SK-N-SH (cell line): ENCODE measurements at regions of chr14 and their contacts with region 1.

Region 1: DNA sequence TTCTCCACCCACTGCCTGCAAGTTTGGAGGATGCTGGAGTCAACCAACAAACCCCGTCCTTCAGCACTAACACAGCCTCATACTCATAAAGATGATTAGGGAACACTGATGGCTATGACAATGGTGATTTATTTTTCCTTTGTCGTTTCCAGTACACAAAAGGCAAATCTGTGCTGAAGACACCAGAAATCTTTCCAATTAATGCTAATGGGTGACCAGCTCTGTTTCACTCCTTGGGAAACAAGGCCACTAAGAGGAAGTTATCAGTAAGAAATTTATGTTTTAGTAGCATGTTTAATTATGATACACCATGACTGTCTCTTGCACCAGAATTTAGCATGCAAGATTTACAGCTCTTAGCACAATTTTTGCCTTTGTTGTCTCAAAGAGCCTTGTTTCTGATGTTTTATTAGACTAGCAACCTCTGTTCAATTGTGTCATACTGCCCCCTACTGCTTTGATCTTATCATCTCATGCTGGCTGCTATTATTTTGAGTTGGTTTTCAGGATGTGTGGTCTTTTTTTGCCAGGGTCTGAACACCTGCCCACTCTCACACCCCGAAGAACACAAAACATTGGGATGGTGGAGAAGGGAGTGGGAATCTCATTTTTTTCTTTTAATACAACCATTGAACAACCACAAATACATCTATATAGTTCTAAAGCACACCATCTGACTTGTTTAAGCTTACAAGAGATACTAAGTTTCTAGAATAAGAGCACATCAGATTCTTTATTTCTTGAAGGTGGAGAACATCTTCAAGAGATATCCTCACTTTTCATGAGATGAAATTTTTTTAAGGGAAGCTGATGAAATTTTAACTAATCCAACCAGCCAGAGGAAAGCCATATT is 160.9 kb downstream of the SPTSSA start:
- DNase-seq: peak; percentile 49
- H3K4me3 ChIP-seq: no peak overlapping the region; a peak in 1 of 4 replicates
- H3K27ac ChIP-seq: no peak overlapping the region
- H3K4me1 ChIP-seq: no peaks in the 10 kb centered on the region; a peak in 1 of 4 replicates
- H3K27me3 ChIP-seq: no peaks in the 10 kb centered on the region; the same call in 1 of the 2 replicates
- CTCF ChIP-seq: peak; percentile 61
- EP300 ChIP-seq: no peak
- RAD21 ChIP-seq: peak; percentile 67

Region 2: GRCh38 chr14:34111968-34112367 is 189.1 kb before region 1 on chr14:
- CTCF ChIA-PET with region 1: no interaction called
- POLR2A ChIA-PET with region 1: no interaction called
- DNase-seq: no peak
- H3K4me3 ChIP-seq: no peak overlapping the region
- H3K27ac ChIP-seq: no peak overlapping the region
- H3K4me1 ChIP-seq: peaks cover 0 to 5% of the 10 kb centered on the region in 2 experiments; a peak in 2 of 4 replicates
- H3K27me3 ChIP-seq: no peaks in the 10 kb centered on the region
- CTCF ChIP-seq: no peak
- EP300 ChIP-seq: no peak
- RAD21 ChIP-seq: no peak

Region 3: DNA sequence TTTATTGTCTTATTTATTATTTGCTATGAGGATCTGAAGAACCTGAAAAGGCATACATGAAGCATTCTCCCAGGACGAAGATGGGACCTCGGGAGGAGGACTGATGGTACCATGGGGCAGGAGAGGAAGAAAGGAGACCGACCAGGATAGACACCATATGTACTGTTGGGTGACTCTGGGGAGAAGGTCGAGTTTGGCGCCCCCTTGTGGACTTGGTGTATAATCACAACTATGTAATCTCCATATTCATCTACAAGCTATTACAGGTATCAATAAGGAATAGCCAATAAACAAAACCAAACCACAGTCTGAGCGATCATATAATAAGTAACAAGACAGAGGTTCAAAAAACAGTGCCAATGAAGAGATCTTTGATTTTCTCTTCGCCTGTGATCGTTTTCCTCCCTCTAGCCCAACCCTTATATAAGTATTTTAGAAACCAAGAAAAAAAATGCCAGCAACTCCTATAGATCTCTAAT is 21.9 kb after region 1 on chr14:
- CTCF ChIA-PET with region 1: interaction called, 44 read pairs
- POLR2A ChIA-PET with region 1: no interaction called
- DNase-seq: peak; percentile 70
- H3K4me3 ChIP-seq: no peak overlapping the region
- H3K27ac ChIP-seq: no peak overlapping the region
- H3K4me1 ChIP-seq: no peaks in the 10 kb centered on the region
- H3K27me3 ChIP-seq: no peaks in the 10 kb centered on the region
- CTCF ChIP-seq: peak; percentile 87
- EP300 ChIP-seq: no peak
- RAD21 ChIP-seq: peak; percentile 32